ENCODE measurements at regions of chr12 and their contacts with region 1.

Region 1: DNA sequence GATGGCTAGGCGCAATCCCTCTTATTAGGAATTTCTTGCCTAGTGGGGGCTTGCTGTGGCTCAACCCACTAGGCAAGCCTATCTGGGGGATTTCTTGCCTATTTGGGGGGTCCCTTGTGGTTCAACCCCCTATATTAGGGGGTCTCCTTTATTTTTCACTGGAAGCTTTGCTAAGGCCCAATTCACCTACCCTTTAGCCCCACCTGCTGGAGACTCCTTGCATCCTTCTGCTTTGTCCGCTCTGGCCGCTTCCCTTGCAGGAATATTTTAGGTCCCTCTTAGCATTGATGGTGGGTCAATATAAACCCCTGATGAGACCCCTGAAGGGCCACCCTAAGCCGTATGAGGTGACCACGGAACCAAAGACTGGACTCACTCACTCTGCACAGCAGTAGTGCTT is 1552.1 kb downstream of the AACS start:
- DNase-seq: no peak
- H3K4me3 ChIP-seq: no peak overlapping the region
- H3K27ac ChIP-seq: no peak overlapping the region
- H3K4me1 ChIP-seq: no peaks in the 10 kb centered on the region
- H3K27me3 ChIP-seq: no peaks in the 10 kb centered on the region
- CTCF ChIP-seq: no peak

Region 2: GRCh38 chr12:126558810-126559209 is 58.5 kb before region 1 on chr12:
- CTCF ChIA-PET with region 1: no interaction called
- dilution Hi-C with region 1: loop called (anchors 5 kb)
- in situ Hi-C with region 1: no loop called
- intact Hi-C with region 1: no loop called
- DNase-seq: no peak
- H3K4me3 ChIP-seq: no peak overlapping the region
- H3K27ac ChIP-seq: no peak overlapping the region
- H3K4me1 ChIP-seq: no peaks in the 10 kb centered on the region
- H3K27me3 ChIP-seq: no peaks in the 10 kb centered on the region
- CTCF ChIP-seq: no peak

Region 3: GRCh38 chr12:127205781-127206535 is 588.6 kb after region 1 on chr12:
- CTCF ChIA-PET with region 1: no interaction called
- dilution Hi-C with region 1: no loop called
- in situ Hi-C with region 1: no loop called
- intact Hi-C with region 1: no loop called
- DNase-seq: no peak
- H3K4me3 ChIP-seq: no peak overlapping the region
- H3K27ac ChIP-seq: no peak overlapping the region
- H3K4me1 ChIP-seq: no peaks in the 10 kb centered on the region
- H3K27me3 ChIP-seq: no peaks in the 10 kb centered on the region
- CTCF ChIP-seq: no peak

Measured in mammary epithelial cell (primary cell).